GM23248 (cell line): ENCODE measurements at regions of chr12 and their contacts with region 1.

Region 1: DNA sequence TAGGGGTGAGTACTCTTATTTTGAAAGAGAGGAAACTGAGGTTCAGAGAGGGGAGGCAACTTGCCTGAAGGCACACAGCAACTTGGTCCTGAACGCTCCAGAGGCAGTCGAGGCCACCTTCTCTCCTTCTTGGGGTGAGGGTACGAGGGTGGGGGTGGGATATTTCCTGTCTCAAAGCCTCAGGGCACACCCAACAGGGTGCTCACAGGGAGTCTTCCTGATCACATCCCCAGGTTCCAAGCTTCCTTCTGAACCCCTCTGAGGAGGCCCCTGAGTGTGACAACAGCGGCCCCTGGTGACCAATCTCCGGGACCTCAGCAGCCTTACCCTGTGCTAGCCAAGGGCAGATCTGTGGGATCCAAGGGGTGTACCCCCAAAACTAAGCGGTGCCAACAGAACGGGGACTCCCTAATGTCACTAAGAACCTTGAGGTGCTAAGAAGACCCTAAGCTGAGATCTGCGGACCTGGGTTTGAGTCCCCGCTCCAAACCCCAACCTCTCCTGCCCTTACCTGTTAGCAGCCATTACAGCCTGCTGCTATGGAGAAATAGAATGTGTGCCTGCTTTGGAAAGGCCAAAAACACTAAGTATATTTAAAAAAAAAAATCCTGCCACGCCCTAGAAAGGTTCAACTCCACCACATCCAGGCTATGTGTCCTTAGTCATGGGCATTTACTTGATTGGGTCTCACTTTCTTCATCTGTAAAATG is 57.9 kb downstream of the TRPV4 start:
- DNase-seq: peak; percentile 77
- H3K4me3 ChIP-seq: no peak overlapping the region
- H3K27ac ChIP-seq: no peak overlapping the region
- H3K4me1 ChIP-seq: no peaks in the 10 kb centered on the region
- H3K27me3 ChIP-seq: no peaks in the 10 kb centered on the region

Region 2: DNA sequence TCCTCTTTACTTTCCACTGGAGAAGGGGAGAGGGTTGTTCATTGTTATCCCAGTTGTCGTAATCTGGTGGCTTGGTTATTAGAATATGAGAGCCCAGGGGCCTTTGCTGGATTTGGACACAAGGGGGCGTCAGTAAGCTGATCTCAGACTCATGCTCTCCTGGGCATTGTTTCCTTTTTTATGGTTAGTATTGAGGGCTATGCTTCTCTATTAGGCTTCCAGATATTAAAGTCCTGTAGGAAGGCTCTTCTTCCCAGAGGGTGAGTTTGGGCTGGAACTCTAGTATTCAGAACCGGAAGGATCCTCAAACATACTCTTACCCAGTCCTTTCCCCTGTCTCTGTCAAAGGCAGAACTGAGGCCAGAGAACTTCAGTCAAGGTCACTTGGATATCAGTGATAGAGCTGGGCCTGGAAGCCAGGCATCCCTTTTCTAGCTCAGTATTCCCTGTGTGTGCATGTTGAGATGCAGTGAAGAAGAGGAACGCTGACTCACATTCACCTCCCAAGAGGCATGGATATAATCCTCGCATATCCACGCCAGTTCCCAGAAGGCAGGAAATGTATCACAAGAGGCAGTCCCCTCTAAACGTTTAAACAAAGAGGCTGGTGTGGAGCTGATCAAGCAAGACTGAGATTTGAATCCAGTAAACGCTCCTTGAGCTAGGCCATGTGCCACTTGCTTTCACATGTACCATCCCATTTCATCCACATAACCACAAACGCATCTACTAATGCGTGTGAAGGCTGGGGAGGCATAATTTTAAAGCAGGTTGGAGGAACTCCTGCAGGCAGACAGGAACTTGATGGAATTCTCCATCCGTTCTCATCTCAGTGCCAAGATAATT is 256.3 kb before region 1 on chr12:
- in situ Hi-C with region 1: loop called (anchors 10 kb)
- DNase-seq: peak; percentile 81
- H3K4me3 ChIP-seq: no peak overlapping the region
- H3K27ac ChIP-seq: peak overlapping the region; percentile 85
- H3K4me1 ChIP-seq: peaks cover 9% of the 10 kb centered on the region
- H3K27me3 ChIP-seq: no peaks in the 10 kb centered on the region

Region 3: DNA sequence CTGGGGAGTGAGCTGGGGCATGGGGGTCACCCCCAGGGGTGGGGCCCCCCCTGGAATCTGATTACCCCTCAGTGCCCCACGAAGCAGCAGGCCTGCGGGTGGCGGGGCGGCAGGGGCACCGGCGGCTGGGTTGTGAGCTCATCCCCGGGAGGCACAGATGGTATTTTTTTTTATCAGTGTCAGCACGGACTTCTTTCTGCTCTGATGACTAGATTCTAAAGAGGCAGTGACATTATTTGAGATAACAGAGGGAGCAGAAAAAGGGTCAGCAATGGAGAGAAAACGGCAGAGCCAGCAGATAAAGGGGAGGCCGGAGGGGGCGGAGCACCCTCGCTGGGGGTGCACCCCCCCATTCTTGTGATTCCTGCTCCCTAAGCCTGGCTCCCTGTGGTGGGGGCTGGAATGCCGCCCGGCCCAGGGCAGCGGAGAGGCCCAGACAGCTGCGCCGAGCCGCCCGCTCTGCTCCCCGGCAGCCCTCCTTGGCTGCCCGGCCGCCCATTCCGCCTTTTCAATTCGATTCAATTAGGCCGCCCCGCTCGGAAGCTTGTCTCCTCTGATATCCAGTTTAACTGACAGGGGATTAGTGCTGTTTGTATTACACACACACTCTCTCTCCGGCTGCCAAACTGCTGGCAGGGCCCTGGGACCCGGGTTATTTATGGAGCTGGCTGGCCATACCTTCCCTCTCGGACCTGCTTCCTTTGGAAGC is 168.9 kb before region 1 on chr12:
- in situ Hi-C with region 1: loop called (anchors 10 kb)
- DNase-seq: no peak
- H3K4me3 ChIP-seq: no peak overlapping the region
- H3K27ac ChIP-seq: no peak overlapping the region
- H3K4me1 ChIP-seq: no peaks in the 10 kb centered on the region
- H3K27me3 ChIP-seq: no peaks in the 10 kb centered on the region